Dorsolateral prefrontal cortex (tissue), 120 donors: ENCODE measurements at regions of chr1 and their contacts with region 1.

Region 1: DNA sequence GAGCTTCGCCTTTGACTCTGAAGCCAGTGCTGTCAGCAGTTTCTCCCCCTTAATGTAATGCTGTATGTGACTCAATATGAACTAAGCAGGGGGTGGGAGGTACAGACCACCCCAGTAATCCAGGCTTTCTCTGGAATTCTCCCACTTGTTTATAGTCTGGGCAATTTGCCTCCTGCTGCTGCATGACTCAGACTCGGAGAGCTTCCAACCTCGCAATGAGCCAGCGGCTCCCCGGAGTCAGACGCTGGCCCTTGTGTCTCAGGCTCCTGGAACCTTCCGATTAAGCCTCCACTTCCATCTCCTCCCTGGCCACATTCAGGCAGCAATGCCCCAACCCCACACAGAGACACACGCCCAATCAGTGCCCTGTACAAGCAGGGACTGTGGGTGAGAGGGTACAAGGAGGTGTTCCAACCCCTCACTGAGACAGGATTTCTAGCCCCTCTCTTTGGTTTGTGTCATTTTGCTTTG is 471.7 kb upstream of the VAMP3 start:
- DNase-seq: peak; percentile 37 to 83 (median 68)
- H3K4me3 ChIP-seq: peak overlapping the region in 9 of 59 donors; percentile 9 to 35 (median 18)
- H3K27ac ChIP-seq: peak overlapping the region in 11 of 59 donors; percentile 8 to 55 (median 43)
- H3K27me3 ChIP-seq: no peaks in the 10 kb centered on the region
- CTCF ChIP-seq: no peak

Region 2: GRCh38 chr1:7388479-7389185 is 89.3 kb after region 1 on chr1:
- intact Hi-C with region 1: loop called in 1 of 2 experiments (anchors 10 kb)
- DNase-seq: peak; percentile 53 to 88 (median 80)
- H3K4me3 ChIP-seq: peak overlapping the region in 33 of 59 donors; percentile 1 to 50 (median 21)
- H3K27ac ChIP-seq: peak overlapping the region in 19 of 59 donors; percentile 0 to 64 (median 19)
- H3K27me3 ChIP-seq: no peaks in the 10 kb centered on the region
- CTCF ChIP-seq: peak in 5 of 56 donors; percentile 8 to 14 (median 10)